Left ventricle myocardium inferior (tissue), 1 donor: ENCODE measurements at regions of chr20 and their contacts with region 1.

Region 1: DNA sequence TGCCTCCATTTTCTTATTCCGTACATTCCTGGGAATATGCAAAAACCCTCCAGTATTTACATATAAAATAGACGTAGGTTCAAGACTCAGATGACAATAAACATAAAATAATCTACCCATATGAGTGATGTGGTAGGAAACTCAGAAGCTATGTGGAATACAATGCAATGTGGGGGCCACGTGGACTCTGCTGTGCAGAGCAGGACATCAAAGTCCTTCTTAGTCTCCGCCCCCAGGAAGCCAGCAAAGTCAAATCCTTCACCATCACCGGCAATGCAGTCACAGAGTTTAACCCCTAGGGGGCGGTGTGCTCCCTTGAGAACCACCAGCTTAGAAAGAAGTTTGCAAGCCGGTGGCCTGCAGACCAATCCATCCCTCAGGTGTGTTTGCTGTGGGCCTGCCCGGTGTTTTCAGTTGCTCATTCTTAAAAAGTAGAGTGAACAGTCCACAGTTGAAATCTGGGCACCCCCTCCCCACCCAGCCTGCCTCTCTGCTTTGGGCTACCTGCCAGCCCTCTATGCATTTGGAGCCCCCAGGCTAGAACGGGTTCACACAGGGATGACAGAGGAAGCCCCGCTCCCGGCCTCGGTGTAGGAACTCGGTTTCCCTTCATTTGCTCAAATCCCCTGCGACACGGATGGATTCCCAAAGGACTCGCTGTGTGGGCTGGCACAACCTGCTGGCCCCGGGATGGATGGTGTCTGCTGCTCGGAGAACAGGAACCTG is 59.9 kb downstream of the SULF2 start:
- DNase-seq: peak; percentile 47
- H3K4me3 ChIP-seq: no peak overlapping the region
- H3K27ac ChIP-seq: no peak overlapping the region
- H3K4me1 ChIP-seq: peaks cover 31% of the 10 kb centered on the region
- H3K27me3 ChIP-seq: no peaks in the 10 kb centered on the region
- CTCF ChIP-seq: peak; percentile 90

Region 2: DNA sequence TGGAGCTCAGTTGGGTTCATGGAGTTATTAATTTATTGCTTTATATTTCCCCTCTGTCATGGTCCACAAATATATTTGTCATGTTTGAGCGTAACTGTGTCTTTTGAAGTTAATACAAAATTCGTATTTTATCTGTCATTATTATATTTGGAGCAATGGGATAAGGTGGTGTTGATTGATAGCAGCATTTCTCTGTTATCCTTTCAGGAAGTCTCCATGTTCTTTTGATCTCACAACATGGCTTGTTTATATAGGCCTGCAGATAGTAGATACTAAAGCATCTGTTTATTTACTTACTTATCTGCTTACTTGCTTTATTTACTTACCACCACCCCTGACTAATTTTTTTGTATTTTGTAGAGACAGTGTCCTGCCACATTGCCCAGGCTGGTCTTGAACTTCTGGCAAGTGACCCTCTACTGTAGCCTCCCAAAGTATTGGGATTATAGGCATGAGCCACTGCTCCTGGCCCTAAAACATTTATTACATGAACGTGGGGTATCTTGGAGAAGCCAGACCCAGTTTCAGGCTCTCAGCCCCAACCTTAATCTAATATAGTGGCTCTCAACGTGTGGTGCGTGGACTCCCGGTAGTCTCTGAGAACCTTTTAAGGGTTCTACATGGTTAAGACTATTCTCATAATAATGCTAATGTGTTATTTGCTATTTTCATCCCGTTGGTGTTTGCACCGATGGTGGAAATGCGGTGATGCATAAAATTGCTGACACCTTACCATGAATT is 119.6 kb before region 1 on chr20:
- intact Hi-C with region 1: no loop called
- DNase-seq: no peak
- H3K4me3 ChIP-seq: no peak overlapping the region
- H3K27ac ChIP-seq: no peak overlapping the region
- H3K4me1 ChIP-seq: peaks cover 68% of the 10 kb centered on the region
- H3K27me3 ChIP-seq: no peaks in the 10 kb centered on the region
- CTCF ChIP-seq: no peak

Region 3: DNA sequence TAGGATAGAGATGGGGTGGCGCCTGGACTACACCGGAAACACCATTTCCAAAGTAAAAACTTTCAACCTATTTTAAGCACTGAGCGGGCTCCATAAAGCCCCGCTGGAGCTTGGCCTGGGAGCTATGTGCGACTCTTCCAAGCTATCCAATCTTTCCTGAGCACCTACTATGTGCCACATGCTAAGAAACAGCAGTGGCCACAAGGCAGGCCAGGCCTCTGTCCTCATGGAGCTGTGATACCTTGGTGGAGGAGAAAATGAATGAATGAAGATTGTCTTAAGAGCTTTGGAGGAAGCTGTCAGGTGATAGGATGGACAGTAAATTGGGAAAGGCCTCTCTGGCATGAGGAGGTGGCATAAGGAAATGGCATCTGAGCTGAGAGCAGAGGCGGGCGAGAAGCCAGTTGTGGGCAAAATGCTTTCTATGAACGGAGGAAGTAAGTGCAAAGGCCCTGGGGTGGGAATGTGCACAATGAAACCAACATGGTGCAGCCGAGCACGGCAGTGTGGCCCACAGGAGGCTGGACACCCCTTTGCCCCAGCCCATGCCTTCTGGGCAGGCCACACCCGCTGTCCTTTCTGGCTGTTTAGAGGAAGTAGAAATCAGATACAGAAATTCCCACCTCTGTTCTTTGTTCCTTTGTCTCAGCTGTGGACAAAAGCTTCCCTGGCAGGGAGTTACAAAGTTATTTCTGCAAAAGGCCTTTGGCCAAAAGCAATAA is 47.7 kb after region 1 on chr20:
- intact Hi-C with region 1: loop called (anchors 10 kb)
- DNase-seq: peak; percentile 52
- H3K4me3 ChIP-seq: no peak overlapping the region
- H3K27ac ChIP-seq: peak overlapping the region; percentile 90
- H3K4me1 ChIP-seq: peaks cover 47% of the 10 kb centered on the region
- H3K27me3 ChIP-seq: peaks cover 16% of the 10 kb centered on the region
- CTCF ChIP-seq: no peak